GM10248 (cell line): ENCODE measurements at regions of chr9 and their contacts with region 1.

Region 1: GRCh38 chr9:19342947-19343346 is 37.1 kb downstream of the RPS6 start:
- DNase-seq: no peak
- CTCF ChIP-seq: no peak

Region 2: DNA sequence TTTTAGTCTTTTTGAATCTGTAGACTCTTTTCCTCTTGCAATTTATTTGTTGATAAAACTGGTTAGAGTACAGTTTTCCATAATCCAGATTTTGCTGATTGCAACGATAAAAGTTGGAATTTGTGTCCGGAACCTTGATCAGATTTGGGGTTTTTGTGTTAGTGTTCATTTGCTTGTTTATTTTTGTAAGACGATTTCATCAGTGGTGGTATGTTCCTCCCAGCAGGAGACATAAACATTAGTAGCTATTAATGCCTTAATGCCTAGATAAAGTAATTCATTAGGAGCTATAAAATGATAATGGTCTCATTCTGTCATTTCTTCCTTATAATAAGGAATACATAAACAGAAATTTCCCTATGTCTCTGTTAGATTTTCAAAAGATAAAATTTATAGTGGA is 15.8 kb after region 1 on chr9:
- CTCF ChIA-PET with region 1: interaction called, 16 read pairs
- POLR2A ChIA-PET with region 1: no interaction called
- DNase-seq: no peak
- CTCF ChIP-seq: no peak

Region 3: DNA sequence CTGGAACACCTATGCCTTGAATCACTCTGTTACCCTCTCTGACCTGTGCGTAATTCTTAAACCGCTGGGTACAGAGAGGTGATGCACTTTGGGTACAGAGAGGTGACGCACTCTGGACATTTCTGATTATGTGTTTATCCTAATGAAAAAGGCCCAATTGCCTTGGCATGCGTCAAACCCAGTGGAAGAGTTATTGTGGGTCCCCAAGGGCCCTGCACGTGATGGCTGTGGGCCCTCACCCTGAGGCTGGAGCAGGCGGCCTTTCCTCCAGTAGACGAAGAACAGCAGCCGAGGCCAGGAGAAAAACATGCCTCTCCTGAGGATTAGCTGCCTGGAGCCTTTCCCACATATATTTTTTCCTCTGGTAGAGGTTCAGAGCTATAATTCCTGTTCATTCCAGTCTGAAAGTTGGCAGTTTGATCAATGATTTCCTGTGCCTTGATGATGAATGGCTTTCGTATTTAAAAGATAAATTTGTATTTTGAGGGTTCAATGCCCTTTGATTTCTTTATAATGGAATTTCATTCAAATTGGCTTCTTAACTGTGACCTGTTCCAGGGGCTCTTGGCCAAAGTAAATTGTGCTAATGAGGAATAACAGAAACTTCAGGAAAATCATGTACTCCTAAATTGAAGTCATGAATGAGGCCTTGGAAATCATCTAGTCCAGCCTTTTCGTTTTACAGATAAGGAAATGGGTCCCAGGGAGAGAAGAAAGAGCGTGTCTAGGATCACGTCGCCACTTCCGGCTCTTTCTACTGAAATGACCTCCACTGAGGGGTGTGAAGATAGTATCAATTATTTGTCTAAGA is 88.6 kb after region 1 on chr9:
- CTCF ChIA-PET with region 1: no interaction called
- POLR2A ChIA-PET with region 1: no interaction called
- DNase-seq: no peak
- CTCF ChIP-seq: no peak